ENCODE measurements at regions of chr18 and their contacts with region 1.

Region 1: GRCh38 chr18:67730884-67731283 is 214.4 kb upstream of the DSEL start:
- DNase-seq: peak; percentile 91
- H3K4me3 ChIP-seq: no peak overlapping the region
- H3K27ac ChIP-seq: peak overlapping the region; percentile 89
- H3K4me1 ChIP-seq: peaks cover 34% of the 10 kb centered on the region
- H3K27me3 ChIP-seq: no peaks in the 10 kb centered on the region
- CTCF ChIP-seq: no peak

Region 2: DNA sequence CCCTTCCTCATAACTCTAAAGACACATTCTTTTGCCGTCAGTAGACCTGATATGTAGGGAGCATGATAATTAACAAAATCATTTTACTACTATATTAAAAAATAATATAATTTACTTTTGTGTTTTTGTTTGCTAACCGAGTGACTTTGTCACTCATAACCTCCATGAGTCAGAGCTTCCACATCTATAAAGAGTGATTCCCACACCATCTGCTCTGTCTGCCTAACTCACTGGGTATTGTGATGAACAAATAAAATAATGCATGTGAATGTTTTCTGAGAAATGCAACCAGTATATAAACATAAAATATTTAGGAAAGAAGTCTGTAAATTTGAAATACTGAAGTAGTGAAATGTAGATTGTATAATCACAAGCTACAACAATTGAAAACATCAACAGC is 91.0 kb before region 1 on chr18:
- CTCF ChIA-PET with region 1: no interaction called
- dilution Hi-C with region 1: no loop called
- in situ Hi-C with region 1: no loop called
- intact Hi-C with region 1: no loop called
- DNase-seq: no peak
- H3K4me3 ChIP-seq: no peak overlapping the region
- H3K27ac ChIP-seq: no peak overlapping the region
- H3K4me1 ChIP-seq: no peaks in the 10 kb centered on the region
- H3K27me3 ChIP-seq: no peaks in the 10 kb centered on the region
- CTCF ChIP-seq: no peak

Region 3: DNA sequence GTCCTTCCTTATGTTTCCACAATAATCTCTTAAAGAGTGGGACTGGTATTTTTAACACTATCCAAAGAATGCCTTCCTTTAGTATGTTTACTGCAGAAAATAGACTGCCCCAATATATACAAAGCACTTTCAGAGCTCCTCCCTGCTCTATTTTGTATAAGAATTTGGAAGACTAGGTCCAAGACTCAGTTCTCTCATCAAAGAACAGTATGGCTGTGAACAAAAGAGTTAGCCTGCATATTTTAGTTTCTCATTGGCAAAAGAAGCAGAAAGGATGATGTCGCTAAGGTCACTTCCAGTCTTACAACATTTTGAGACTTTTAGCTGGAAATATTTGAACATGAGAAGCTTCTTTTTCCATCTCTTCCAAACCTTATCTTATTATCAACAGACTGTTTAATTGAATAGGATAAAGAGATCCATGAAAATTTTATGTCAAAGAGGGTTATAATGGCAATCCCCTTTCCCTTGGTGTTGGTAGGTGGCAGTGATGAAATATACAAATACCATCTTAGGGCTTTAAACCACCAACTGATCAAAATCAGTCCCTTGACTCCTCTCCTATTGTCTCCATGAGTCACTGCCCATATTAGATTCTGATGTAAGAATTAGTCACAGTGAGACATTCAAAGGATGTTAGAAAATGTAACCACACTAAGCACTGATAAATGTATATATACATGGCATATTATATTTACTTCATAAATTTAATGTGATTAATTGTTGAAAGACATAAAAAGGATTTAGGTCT is 52.5 kb after region 1 on chr18:
- CTCF ChIA-PET with region 1: no interaction called
- dilution Hi-C with region 1: no loop called
- in situ Hi-C with region 1: no loop called
- intact Hi-C with region 1: loop called (anchors 5 kb)
- DNase-seq: peak; percentile 92
- H3K4me3 ChIP-seq: no peak overlapping the region
- H3K27ac ChIP-seq: peak overlapping the region; percentile 75
- H3K4me1 ChIP-seq: peaks cover 12% of the 10 kb centered on the region
- H3K27me3 ChIP-seq: no peaks in the 10 kb centered on the region
- CTCF ChIP-seq: no peak

Measured in mammary epithelial cell (primary cell).